ENCODE measurements at regions of chr16 and their contacts with region 1.

Region 1: GRCh38 chr16:89142478-89143195 is 28.9 kb upstream of the CDH15 start:
- DNase-seq: no peak
- H3K4me3 ChIP-seq: no peak overlapping the region
- H3K27ac ChIP-seq: no peak overlapping the region
- H3K27me3 ChIP-seq: no peaks in the 10 kb centered on the region
- CTCF ChIP-seq: no peak

Region 2: GRCh38 chr16:88130681-88131080 is 1012.0 kb before region 1 on chr16:
- CTCF ChIA-PET with region 1: no interaction called
- POLR2A ChIA-PET with region 1: interaction called, 11 read pairs
- DNase-seq: no peak
- H3K4me3 ChIP-seq: no peak overlapping the region
- H3K27ac ChIP-seq: no peak overlapping the region
- H3K27me3 ChIP-seq: peaks cover 3% of the 10 kb centered on the region
- CTCF ChIP-seq: no peak

Region 3: GRCh38 chr16:89201439-89202377 is 59.1 kb after region 1 on chr16:
- CTCF ChIA-PET with region 1: no interaction called
- POLR2A ChIA-PET with region 1: no interaction called
- DNase-seq: no peak
- H3K4me3 ChIP-seq: peak overlapping the region; percentile 42
- H3K27ac ChIP-seq: no peak overlapping the region
- H3K27me3 ChIP-seq: peaks cover 54% of the 10 kb centered on the region
- CTCF ChIP-seq: no peak